Uterus (tissue), 4 donors: ENCODE measurements at regions of chr15 and their contacts with region 1.

Region 1: DNA sequence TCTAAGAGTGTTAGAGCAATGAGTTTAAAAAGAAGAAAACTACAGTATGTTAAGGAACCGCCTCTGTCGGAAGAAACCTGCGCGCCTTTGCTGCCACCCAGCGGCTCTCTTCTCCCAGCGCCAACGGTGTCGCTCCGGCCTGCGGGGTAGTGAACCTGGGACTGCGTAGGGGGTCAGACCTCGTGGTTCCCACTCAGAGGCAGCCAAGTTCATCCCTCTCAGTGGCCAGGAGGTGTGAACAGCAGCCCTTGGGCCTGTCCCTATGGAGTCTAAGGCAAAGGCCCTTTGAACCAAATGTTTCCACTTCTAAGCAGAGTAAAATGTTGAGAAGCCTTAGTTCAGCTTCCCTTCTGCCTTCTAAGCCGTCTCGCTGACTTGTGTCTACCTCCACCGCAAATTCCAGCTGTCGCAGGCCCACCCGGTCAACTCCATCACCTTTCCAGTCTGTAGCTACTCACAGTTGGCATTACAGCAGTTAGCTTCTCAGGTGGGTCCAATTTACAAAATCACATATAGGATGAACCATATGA is 980 bp upstream of the RAB27A start:
- DNase-seq: peak; percentile 83 to 87
- H3K4me3 ChIP-seq: peak overlapping the region; percentile 57 to 72
- H3K27ac ChIP-seq: peak overlapping the region; percentile 88 to 92
- H3K4me1 ChIP-seq: no peaks in the 10 kb centered on the region
- H3K27me3 ChIP-seq: no peaks in the 10 kb centered on the region
- CTCF ChIP-seq: peak; percentile 81 to 90 (median 88)
- POLR2A ChIP-seq: no peak

Region 2: DNA sequence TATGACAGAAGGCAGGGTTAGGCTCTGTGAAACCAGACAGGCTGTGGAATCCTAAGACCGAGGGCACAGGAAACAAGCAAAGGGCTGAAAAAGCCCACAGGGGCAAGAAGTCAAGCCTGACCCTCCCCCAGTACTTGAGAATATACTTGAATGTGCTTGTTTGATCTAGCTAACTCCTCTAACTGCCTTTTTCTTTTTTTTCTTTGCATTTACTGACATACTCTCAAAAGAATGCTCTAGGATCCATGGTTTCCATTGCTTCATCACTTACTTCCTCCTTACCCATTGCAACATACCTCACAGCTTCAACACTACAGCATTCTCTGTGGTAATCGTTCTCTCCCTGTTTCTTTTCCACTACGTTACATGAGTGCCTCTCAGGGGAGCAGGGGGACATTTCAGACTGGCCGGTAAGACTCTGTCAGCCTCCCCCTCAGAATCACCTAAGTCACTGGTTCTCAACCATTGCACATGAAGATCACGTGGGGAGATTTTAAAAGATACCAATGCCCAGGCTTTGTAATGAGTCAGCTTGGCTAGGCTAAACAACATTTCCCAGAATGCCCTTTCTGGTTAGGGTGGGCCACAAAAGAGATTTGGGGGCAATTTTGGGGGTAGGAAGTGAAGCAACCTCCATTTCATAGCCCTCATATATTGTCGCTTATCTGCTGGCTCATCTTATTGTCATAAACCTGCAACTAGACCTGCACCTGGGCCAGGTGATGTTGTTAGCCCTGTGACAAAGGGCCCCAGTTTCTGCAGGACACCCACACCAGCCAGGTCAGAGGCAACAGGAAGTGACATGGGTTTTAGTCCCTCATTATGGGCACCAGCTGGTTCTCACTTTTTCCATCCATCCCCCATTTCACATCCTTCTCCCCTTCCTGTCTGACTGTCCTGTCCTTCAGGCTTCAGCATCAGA is 69.2 kb before region 1 on chr15:
- intact Hi-C with region 1: loop called (anchors 2 kb)
- DNase-seq: peak in 1 of 2 donors; percentile 33
- H3K4me3 ChIP-seq: no peak overlapping the region
- H3K27ac ChIP-seq: peak overlapping the region in 1 of 2 donors; percentile 64
- H3K4me1 ChIP-seq: no peaks in the 10 kb centered on the region
- H3K27me3 ChIP-seq: no peaks in the 10 kb centered on the region
- CTCF ChIP-seq: no peak
- POLR2A ChIP-seq: no peak

Region 3: GRCh38 chr15:55357774-55358173 is 67.2 kb after region 1 on chr15:
- intact Hi-C with region 1: no loop called
- DNase-seq: no peak
- H3K4me3 ChIP-seq: no peak overlapping the region
- H3K27ac ChIP-seq: no peak overlapping the region
- H3K4me1 ChIP-seq: no peaks in the 10 kb centered on the region
- H3K27me3 ChIP-seq: no peaks in the 10 kb centered on the region
- CTCF ChIP-seq: no peak
- POLR2A ChIP-seq: no peak